A549 (cell line): ENCODE measurements at regions of chr13 and their contacts with region 1.

Region 1: DNA sequence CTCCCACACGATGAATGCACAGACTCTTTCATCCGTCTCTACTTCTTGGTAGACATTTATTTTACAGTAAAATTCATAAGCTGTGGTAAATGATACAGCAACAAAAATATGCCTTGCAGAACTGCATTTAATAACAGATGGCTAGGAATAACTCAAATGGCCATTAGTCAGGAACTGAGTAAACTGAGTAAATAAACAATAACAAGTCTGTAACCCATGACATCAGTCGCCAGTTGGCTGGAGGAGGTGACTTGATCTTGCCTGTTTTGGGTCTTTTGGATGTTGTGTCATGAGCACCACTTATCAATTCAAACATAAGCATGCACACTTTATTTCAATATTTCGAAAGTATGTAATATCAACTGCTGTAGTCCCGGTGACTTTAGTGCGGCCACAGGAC is 632.6 kb upstream of the ARGLU1 start:
- DNase-seq: no peak
- ATAC-seq: no peak
- H3K4me3 ChIP-seq: no peak overlapping the region
- H3K27ac ChIP-seq: no peak overlapping the region
- H3K4me1 ChIP-seq: no peaks in the 10 kb centered on the region
- CTCF ChIP-seq: no peak
- EP300 ChIP-seq: no peak
- POLR2A ChIP-seq: no peak
- RAD21 ChIP-seq: no peak

Region 2: GRCh38 chr13:107211073-107211472 is 10.6 kb after region 1 on chr13:
- CTCF ChIA-PET with region 1: interaction called, 10 read pairs
- POLR2A ChIA-PET with region 1: no interaction called
- DNase-seq: peak; percentile 25 to 61
- ATAC-seq: peak; percentile 94 to 95
- H3K4me3 ChIP-seq: no peak overlapping the region
- H3K27ac ChIP-seq: no peak overlapping the region
- H3K4me1 ChIP-seq: no peaks in the 10 kb centered on the region
- CTCF ChIP-seq: peak; percentile 58
- EP300 ChIP-seq: no peak
- POLR2A ChIP-seq: no peak
- RAD21 ChIP-seq: peak; percentile 69 to 72